ENCODE measurements at regions of chr6 and their contacts with region 1.

Region 1: DNA sequence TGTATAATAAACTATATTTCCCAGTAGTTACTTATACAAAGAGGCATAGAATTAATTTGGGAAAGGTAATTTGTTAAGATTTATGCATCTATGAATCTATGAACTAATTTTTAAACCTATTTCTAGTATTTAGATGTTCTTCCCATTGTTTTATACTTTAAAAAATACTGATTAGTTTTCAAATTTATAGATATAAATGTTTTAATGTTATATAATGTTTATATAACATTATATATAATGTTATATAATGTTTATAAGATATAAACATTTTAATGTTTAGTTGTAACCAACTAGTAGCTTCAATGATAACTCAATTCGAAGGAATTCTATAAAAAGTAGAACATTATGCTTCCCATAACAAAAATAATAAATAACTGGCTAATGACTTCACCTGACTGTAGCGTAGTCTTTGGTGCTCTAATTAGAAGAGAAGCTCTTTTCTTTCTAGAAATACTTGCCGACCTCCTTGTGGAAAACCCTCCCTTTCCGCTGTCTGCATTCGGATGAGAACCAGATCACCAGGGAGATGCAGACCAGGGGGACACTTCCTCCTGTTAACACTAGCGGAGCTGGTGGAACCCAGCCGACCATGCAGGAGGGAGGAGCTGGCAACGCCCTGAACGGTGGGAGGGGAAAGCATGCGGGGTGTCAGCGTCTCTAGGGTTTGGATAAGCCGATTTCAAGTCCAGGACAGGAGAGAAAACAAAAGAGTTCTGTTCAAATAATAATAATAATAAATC is 158.4 kb downstream of the OR2B2 start:
- DNase-seq: peak; percentile 87
- H3K4me3 Mint-ChIP-seq: peak overlapping the region; percentile 83
- H3K27ac Mint-ChIP-seq: peak overlapping the region; percentile 69
- H3K4me1 Mint-ChIP-seq: peaks cover 33% of the 10 kb centered on the region
- H3K27me3 Mint-ChIP-seq: peaks cover 3% of the 10 kb centered on the region

Region 2: DNA sequence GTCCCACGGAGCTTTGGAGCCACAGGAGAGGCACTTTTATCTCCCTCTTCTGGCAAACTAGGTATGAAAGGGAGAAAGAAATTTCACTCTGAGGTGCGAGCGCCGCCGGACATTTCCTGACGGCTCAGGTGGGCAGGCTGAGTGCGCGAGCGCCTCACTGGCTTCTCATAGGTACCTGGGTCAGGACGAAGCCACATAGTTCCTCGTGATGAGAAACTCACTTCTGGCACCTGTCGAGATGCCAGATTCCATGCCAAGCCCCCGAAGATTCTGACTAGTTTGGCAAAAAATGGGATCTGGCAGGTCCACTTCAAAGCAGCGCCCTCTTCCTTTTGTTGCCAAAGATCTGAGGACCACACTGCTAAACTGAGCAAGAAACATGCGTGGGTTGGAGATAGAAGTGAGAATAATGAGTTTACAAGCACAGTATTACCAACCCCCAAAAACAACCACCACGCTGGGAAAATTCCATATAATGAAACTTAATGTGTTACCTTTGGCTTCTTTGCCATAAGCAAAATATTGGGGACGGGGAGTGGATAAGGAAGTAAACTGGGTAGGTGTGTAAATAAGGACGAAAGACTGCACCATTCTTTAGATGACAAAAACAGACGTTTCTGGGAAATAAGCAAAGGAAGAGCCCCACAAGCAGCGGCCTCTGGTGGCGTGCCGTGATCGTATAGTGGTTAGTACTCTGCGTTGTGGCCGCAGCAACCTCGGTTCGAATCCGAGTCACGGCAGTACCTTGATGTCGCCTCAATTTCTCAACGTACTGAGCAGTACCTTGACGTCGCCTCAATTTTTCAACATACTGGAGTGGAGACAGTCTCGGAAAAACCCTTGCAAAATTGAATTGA is 596.2 kb before region 1 on chr6:
- CTCF ChIA-PET with region 1: interaction called, 9 read pairs
- POLR2A ChIA-PET with region 1: no interaction called
- intact Hi-C with region 1: loop called (anchors 2 kb)
- DNase-seq: peak; percentile 91
- H3K4me3 Mint-ChIP-seq: peak overlapping the region; percentile 66
- H3K27ac Mint-ChIP-seq: peak overlapping the region; percentile 77
- H3K4me1 Mint-ChIP-seq: peaks cover 45% of the 10 kb centered on the region
- H3K27me3 Mint-ChIP-seq: no peaks in the 10 kb centered on the region

Region 3: GRCh38 chr6:27503436-27504030 is 250.3 kb before region 1 on chr6:
- CTCF ChIA-PET with region 1: interaction called, 18 read pairs
- POLR2A ChIA-PET with region 1: no interaction called
- intact Hi-C with region 1: loop called (anchors 2 kb)
- DNase-seq: peak; percentile 86
- H3K4me3 Mint-ChIP-seq: peak overlapping the region; percentile 88
- H3K27ac Mint-ChIP-seq: peak overlapping the region; percentile 85
- H3K4me1 Mint-ChIP-seq: peaks cover 26% of the 10 kb centered on the region
- H3K27me3 Mint-ChIP-seq: peaks cover 10% of the 10 kb centered on the region

Region 4: DNA sequence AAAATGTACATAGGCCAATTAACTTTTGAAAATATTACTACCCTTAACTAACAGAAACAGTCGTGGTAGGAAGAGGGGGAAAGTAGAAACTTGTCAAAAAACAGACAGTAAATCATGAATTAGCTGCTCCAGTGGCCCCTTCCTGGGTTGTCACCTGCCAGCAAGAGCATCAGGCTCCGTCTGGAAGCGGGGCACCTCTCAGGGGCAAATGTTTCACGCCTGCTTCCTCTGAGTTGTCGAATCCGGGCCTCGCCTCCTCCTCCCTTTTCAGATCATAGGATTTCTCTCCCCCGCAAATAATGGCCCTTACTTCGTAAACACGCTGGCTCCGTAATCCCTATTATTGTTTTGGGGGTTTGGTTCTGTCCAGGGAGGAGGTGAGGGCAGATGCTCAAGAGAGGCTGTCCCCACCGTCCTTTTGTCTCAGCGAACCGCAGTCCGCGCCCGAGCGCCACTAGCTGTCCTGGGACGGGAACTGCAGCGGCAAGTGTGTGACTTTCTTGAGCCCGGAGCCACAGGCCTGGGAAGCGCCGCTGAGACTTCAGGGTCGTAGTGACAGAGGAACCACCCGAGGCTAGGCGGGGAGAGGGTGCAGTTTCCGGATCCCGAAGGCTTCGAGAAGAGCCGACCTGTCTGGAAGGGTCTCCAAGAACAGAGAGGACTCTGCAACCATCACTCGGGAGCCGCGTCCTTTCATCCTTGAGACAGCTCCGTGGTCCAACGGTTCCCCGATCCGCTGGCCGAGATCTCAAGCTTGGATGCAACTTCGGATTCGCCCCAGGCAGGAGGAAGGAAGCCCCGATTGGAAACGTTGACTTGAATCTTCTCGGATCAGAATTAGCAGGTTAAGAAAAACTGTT is 66.5 kb before region 1 on chr6:
- CTCF ChIA-PET with region 1: interaction called, 16 read pairs
- POLR2A ChIA-PET with region 1: interaction called, 5 read pairs
- intact Hi-C with region 1: loop called (anchors 1 kb)
- DNase-seq: peak; percentile 90
- H3K4me3 Mint-ChIP-seq: peak overlapping the region; percentile 87
- H3K27ac Mint-ChIP-seq: peak overlapping the region; percentile 84
- H3K4me1 Mint-ChIP-seq: peaks cover 14% of the 10 kb centered on the region
- H3K27me3 Mint-ChIP-seq: peaks cover 15% of the 10 kb centered on the region

Region 5: DNA sequence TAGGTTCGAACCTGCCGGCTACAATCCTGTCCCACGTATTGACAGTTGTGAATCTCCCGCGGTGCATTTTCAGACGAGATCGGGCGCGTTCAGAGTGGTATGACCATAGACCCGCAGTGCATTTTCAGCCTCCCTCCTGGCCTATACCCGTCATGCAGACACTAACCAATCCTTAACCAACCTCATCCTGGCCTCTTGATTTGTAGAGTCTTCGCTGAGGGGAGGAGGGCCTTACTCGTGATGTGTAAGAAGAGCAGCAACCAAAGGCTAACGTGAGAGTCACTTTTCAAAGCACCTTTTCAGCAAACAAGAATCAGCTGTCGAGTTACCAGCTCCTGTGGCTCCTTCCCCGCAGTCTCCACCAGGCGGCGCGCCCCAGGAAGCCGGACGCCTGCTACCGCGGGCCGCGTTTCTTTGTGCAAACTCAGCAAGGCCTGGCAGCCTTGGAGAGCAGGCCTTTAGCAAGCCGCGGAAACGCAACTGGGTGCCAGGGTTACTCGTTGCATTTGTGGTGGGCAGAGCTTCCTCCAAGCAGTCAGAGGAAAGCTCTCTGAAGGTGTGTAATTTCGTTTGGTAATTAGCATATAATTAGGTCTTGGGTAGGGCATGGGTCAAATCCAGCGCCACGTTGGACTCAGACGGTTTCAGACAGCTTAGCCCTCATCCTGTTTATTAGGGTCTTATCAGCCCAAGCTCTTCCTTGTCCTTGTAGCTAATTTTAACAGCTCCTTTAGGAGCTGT is 18.6 kb after region 1 on chr6:
- CTCF ChIA-PET with region 1: interaction called, 29 read pairs
- POLR2A ChIA-PET with region 1: interaction called, 5 read pairs
- intact Hi-C with region 1: loop called (anchors 2 kb)
- DNase-seq: peak; percentile 93
- H3K4me3 Mint-ChIP-seq: peak overlapping the region; percentile 40
- H3K27ac Mint-ChIP-seq: peak overlapping the region; percentile 18
- H3K4me1 Mint-ChIP-seq: peaks cover 7% of the 10 kb centered on the region
- H3K27me3 Mint-ChIP-seq: peaks cover 12% of the 10 kb centered on the region

Region 6: GRCh38 chr6:27797960-27798359 is 44.1 kb after region 1 on chr6:
- CTCF ChIA-PET with region 1: no interaction called
- POLR2A ChIA-PET with region 1: no interaction called
- intact Hi-C with region 1: no loop called
- DNase-seq: no peak
- H3K4me3 Mint-ChIP-seq: no peak overlapping the region
- H3K27ac Mint-ChIP-seq: no peak overlapping the region
- H3K4me1 Mint-ChIP-seq: peaks cover 6% of the 10 kb centered on the region
- H3K27me3 Mint-ChIP-seq: peaks cover under 1% of the 10 kb centered on the region